ENCODE measurements at regions of chr11 and their contacts with region 1.

Region 1: GRCh38 chr11:124865921-124866583 is 820 bp downstream of the ROBO3 start:
- DNase-seq: peak; percentile 91
- H3K4me3 ChIP-seq: peak overlapping the region; percentile 43 to 64
- H3K27ac ChIP-seq: no peak overlapping the region
- H3K4me1 ChIP-seq: peaks cover 4 to 31% of the 10 kb centered on the region in 2 experiments; a peak in 1 of 4 replicates
- H3K27me3 ChIP-seq: peaks cover 78% of the 10 kb centered on the region
- CTCF ChIP-seq: peak; percentile 83
- EP300 ChIP-seq: no peak
- RAD21 ChIP-seq: peak; percentile 46

Region 2: DNA sequence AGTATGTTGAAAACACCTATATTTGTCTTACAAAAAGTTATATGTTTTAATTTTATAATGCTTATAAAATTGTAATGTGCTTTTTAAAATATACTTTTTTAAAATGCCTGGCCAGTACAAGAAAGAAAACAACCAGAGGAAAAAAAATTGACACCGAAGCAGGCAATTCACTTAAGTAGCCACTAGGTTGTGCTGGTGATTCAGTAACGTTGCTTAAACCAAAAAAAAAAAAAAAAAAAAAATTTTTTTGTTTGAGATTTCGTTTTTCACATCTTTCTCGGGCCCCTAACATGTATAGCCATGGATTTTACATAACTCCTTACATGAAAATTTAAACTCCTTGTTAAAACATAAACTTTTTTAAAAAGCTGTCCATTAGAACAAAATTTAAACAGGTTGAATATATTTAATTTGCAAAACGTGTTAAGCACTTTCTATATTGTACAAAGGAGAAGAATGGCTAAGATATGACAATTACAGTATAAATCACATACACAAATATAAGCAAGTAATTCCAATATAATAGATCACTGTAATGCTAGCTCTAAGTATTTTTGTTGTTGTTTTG is 450.6 kb before region 1 on chr11:
- CTCF ChIA-PET with region 1: no interaction called
- POLR2A ChIA-PET with region 1: no interaction called
- DNase-seq: no peak
- H3K4me3 ChIP-seq: no peak overlapping the region
- H3K27ac ChIP-seq: no peak overlapping the region
- H3K4me1 ChIP-seq: no peaks in the 10 kb centered on the region
- H3K27me3 ChIP-seq: peaks cover 9% of the 10 kb centered on the region; the same call in 1 of the 2 replicates
- CTCF ChIP-seq: peak; percentile 59
- EP300 ChIP-seq: no peak
- RAD21 ChIP-seq: peak; percentile 38; the same call in 1 of the 2 replicates

Region 3: DNA sequence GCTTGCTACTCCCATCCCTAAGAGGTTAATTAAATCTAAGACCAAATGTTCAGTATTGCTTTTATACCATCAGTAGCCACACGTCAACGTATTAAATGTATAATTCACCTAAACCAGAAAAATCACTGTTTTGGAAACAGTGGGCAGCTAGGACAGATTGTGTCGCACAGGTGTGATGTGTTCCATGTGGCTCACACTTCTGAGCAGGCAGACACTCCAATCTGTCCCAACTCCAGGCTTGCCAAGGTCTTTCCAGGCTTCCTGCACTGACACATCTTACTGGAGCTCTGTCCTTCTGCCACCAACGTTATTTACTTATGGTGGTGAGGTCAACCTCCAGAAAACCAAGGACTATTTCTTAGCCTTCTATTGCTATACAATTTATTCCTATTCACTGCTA is 203.9 kb before region 1 on chr11:
- CTCF ChIA-PET with region 1: interaction called, 18 read pairs
- POLR2A ChIA-PET with region 1: no interaction called
- DNase-seq: no peak
- H3K4me3 ChIP-seq: no peak overlapping the region
- H3K27ac ChIP-seq: no peak overlapping the region
- H3K4me1 ChIP-seq: peaks cover 0 to 5% of the 10 kb centered on the region in 2 experiments; a peak in 2 of 4 replicates
- H3K27me3 ChIP-seq: no peaks in the 10 kb centered on the region
- CTCF ChIP-seq: no peak
- EP300 ChIP-seq: no peak
- RAD21 ChIP-seq: no peak

Region 4: DNA sequence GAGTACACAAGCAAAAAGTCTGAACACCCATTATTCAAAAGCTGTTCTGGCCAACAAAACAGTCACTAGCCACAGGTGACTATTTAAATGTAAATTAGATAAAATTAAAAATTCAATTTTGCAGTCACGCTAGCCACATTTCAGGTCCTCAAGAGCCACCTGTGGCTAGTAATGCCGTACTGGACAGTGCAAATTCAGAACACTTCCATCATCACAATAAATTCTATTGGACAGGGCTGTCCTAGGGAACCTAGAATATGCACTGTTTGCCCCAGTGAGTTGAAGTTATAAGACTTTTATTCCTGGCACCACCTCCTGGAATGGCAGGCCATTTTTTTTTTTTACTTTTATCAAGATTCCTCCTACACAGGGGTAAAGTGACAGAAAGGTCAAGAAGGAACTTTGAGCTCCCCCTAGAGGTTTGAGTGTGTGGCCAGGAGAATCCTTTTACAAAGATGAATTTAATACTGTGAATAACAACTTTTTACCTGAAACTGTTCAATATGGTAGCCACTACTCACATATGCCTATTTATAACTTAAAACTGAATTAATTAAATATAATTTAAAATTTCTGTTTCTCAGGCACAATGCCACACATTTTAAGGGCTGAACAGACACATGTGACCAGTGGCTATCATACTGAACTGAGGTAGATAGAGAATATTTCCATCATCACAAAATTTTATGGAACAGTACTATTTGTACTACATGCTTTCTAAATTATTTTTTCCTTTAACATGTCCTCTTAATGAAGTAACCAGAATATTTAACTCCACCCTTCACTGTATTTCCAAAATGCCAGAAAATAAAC is 72.4 kb before region 1 on chr11:
- CTCF ChIA-PET with region 1: interaction called, 18 read pairs
- POLR2A ChIA-PET with region 1: no interaction called
- DNase-seq: peak; percentile 52
- H3K4me3 ChIP-seq: no peak overlapping the region
- H3K27ac ChIP-seq: no peak overlapping the region
- H3K4me1 ChIP-seq: peaks cover 9 to 16% of the 10 kb centered on the region in 2 experiments; a peak in 3 of 4 replicates
- H3K27me3 ChIP-seq: no peaks in the 10 kb centered on the region
- CTCF ChIP-seq: peak; percentile 82
- EP300 ChIP-seq: no peak
- RAD21 ChIP-seq: peak; percentile 67

Region 5: GRCh38 chr11:124837491-124837856 is 28.6 kb before region 1 on chr11:
- CTCF ChIA-PET with region 1: interaction called, 220 read pairs
- POLR2A ChIA-PET with region 1: no interaction called
- DNase-seq: peak; percentile 70
- H3K4me3 ChIP-seq: peak overlapping the region in 1 of 2 experiments; percentile 52; a peak in 2 of 4 replicates
- H3K27ac ChIP-seq: peak overlapping the region in 1 of 2 experiments; percentile 54; a peak in 1 of 4 replicates
- H3K4me1 ChIP-seq: peaks cover 3 to 4% of the 10 kb centered on the region in 2 experiments; a peak in 2 of 4 replicates
- H3K27me3 ChIP-seq: peaks cover 1% of the 10 kb centered on the region
- CTCF ChIP-seq: peak; percentile 60
- EP300 ChIP-seq: no peak
- RAD21 ChIP-seq: peak; percentile 77

Region 6: DNA sequence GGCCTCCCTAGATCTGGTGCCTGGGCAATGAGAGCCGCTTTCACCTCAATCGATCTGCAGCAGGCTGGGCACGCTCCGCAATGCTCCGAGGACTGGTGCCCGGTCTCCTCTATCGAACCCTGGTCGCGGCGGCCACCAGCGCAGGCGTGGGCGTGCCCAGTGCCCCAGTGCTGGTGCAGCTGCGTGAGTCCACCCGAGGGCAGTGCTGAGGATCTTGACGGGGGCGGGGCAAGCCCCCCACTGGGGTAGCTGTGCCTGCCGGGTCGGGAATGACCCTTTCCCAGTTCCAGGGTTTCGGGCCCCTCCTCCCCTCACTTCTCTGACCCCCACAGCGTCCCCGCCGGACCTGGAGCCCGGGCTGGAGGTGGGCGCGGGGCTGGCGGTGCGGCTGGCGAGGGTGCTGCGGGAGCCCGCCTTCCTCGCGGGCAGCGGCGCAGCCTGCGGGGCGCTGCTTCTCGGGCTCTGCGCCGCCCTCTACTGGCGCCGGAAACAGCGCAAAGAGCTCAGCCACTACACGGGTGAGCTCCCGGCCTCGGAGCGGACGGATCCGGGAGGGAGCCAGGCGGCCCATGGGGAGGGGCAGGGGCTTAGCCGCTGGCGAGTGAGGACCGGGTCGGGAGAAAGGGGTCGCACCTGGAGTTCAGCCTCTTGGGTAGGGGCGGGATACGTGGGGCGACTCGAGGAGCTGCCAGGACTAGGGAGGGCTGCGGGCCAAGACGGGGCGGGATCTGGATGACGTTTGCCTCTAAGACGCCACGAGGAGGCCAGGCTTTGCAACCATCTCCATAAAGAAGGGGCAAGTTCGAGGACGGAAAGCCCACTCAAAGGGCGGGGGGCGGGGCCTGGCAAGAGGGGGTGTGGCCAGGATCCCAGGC is 10.1 kb after region 1 on chr11:
- CTCF ChIA-PET with region 1: interaction called, 55 read pairs
- POLR2A ChIA-PET with region 1: interaction called, 3 read pairs
- DNase-seq: peak; percentile 96
- H3K4me3 ChIP-seq: peak overlapping the region; percentile 73 to 80
- H3K27ac ChIP-seq: peak overlapping the region; percentile 93 to 94
- H3K4me1 ChIP-seq: peaks cover 0 to 17% of the 10 kb centered on the region in 2 experiments; a peak in 1 of 4 replicates
- H3K27me3 ChIP-seq: no peaks in the 10 kb centered on the region
- CTCF ChIP-seq: peak; percentile 75
- EP300 ChIP-seq: no peak
- RAD21 ChIP-seq: peak; percentile 32; the same call in 1 of the 2 replicates

Measured in SK-N-SH (cell line).